Caco-2 (cell line): ENCODE measurements at regions of chr10 and their contacts with region 1.

Region 1: DNA sequence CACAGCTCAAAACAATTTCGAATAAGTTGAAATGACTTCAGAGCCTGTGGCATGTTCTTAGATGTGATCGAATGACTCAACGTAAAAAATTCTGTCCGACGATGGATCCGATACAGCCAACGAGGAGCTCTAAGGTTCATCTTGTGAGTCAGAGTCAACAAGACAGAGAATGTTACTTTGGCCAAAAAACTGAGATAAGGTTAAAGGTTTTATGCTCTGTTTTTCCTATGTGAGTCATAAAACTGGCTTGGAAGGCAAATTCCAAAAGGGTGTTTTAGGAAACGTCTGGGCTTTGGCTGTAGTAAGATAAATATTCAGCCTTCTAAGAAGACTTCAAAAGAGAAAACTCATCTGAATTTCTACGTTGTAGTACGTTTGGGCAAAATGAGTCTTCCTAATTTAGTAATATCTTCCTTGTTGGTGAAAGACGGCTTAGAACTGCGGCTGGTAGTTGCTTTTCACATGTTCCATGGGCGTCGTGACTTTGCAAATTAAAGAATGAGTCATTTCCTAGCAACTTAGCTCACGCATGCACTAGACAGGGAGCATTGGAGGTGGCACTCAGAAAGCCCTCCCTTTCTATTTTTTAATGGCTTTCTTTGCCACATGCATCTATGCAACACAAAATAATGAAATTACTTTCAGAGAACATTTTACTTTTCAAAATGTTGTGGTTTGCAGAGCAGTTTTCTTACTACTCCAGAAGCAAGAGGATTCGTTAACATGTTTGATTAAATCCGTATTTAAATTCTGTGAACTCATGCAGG is 28.2 kb downstream of the PFKP start:
- DNase-seq: peak; percentile 78 to 82
- H3K4me3 ChIP-seq: 0 out of 2 replicates have a peak overlapping the region, but pooled peaks have one; percentile 11
- H3K4me3 Mint-ChIP-seq: peak overlapping the region; percentile 63
- H3K27ac Mint-ChIP-seq: peak overlapping the region; percentile 96
- H3K4me1 ChIP-seq: peaks cover 74% of the 10 kb centered on the region
- H3K4me1 Mint-ChIP-seq: peaks cover 56% of the 10 kb centered on the region
- H3K27me3 ChIP-seq: no peaks in the 10 kb centered on the region
- H3K27me3 Mint-ChIP-seq: no peaks in the 10 kb centered on the region
- CTCF ChIP-seq: no peak

Region 2: GRCh38 chr10:3054183-3054850 is 41.2 kb before region 1 on chr10:
- CTCF ChIA-PET with region 1: no interaction called
- POLR2A ChIA-PET with region 1: interaction called, 7 read pairs
- intact Hi-C with region 1: loop called (anchors 1 kb)
- DNase-seq: peak; percentile 62 to 82
- H3K4me3 ChIP-seq: no peak overlapping the region
- H3K4me3 Mint-ChIP-seq: peak overlapping the region; percentile 41
- H3K27ac Mint-ChIP-seq: peak overlapping the region; percentile 80
- H3K4me1 ChIP-seq: peaks cover 53% of the 10 kb centered on the region
- H3K4me1 Mint-ChIP-seq: peaks cover 27% of the 10 kb centered on the region
- H3K27me3 ChIP-seq: no peaks in the 10 kb centered on the region
- H3K27me3 Mint-ChIP-seq: no peaks in the 10 kb centered on the region
- CTCF ChIP-seq: no peak

Region 3: DNA sequence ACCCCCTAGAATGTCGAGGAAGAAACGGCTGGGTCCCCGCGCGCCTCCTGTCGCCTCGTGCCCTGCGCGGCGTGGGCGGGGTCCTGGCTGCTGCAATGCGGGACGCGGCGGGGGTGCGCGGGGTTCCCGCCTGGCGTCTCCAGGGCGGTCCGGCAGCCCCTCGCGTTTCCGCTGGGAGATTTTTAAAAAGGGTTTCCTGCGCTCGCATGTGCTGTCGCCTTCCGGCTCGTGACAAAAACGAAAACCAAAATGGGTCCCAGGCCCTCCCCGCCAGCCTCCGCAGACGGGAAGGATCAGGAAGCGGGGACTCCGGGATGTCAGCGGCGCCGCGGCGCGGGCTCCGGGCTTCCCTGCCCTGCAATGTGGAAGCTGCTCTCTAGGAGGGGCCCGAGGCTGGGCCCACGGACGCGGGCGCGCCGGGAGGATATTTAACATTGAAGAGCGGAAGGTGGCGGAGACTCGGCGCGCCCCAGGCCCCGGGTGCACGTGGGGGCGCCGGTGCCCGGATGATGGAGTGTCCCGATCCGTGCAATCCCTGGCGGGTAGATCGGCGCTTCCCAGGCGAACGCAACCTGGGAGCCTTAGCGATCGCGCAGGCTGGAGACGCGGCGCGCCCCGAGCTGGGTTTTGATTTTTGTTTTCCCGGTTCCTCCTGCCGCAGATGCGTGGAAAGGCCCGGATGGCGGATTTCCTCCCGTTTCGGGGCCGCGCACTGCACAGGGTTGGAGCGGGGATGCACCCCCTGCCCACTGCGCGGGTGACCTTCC is 27.2 kb before region 1 on chr10:
- CTCF ChIA-PET with region 1: interaction called, 7 read pairs
- POLR2A ChIA-PET with region 1: interaction called, 5 read pairs
- intact Hi-C with region 1: loop called (anchors 1 kb)
- DNase-seq: peak; percentile 67 to 76
- H3K4me3 ChIP-seq: peak overlapping the region; percentile 97
- H3K4me3 Mint-ChIP-seq: peak overlapping the region; percentile 95
- H3K27ac Mint-ChIP-seq: peak overlapping the region; percentile 64
- H3K4me1 ChIP-seq: peaks cover 31% of the 10 kb centered on the region
- H3K4me1 Mint-ChIP-seq: peaks cover 34% of the 10 kb centered on the region
- H3K27me3 ChIP-seq: no peaks in the 10 kb centered on the region
- H3K27me3 Mint-ChIP-seq: no peaks in the 10 kb centered on the region
- CTCF ChIP-seq: peak; percentile 20 to 41

Region 4: DNA sequence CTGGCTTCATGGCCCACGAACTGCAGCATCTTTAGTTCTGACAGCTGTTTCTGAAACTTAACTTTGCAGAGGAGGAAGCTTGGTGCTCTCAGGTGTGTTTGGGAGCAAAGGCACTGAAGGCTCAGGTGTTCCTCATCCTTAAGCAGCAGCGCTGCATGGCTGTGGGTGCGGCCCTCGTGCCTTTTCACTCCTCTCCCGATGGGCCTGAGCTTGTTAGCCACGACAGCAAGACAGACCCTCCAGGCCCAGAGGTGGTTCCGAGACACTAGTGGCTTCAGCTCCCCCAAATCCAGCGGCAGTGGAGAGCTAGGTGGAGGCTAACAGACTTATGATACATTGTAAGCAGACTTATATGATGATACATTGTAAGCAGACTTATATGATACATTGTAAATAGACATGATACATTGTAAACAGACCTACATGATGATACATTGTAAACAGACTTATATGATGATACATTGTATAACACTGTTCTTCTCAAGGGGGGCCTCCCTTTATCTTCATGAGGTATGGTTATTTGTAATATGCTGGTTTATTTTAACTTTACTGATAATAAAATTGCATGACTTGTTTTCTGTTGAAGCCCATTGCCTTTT is 14.1 kb before region 1 on chr10:
- CTCF ChIA-PET with region 1: interaction called, 3 read pairs
- POLR2A ChIA-PET with region 1: no interaction called
- intact Hi-C with region 1: loop called (anchors 2 kb)
- DNase-seq: no peak
- H3K4me3 ChIP-seq: no peak overlapping the region
- H3K4me3 Mint-ChIP-seq: no peak overlapping the region
- H3K27ac Mint-ChIP-seq: no peak overlapping the region
- H3K4me1 ChIP-seq: peaks cover 25% of the 10 kb centered on the region
- H3K4me1 Mint-ChIP-seq: peaks cover 28% of the 10 kb centered on the region
- H3K27me3 ChIP-seq: no peaks in the 10 kb centered on the region
- H3K27me3 Mint-ChIP-seq: no peaks in the 10 kb centered on the region
- CTCF ChIP-seq: no peak

Region 5: GRCh38 chr10:3131094-3131493 is 35.5 kb after region 1 on chr10:
- CTCF ChIA-PET with region 1: no interaction called
- POLR2A ChIA-PET with region 1: no interaction called
- intact Hi-C with region 1: loop called (anchors 1 kb)
- DNase-seq: peak; percentile 72 to 79
- H3K4me3 ChIP-seq: no peak overlapping the region
- H3K4me3 Mint-ChIP-seq: no peak overlapping the region
- H3K27ac Mint-ChIP-seq: peak overlapping the region; percentile 75
- H3K4me1 ChIP-seq: peaks cover 12% of the 10 kb centered on the region
- H3K4me1 Mint-ChIP-seq: peaks cover 6% of the 10 kb centered on the region
- H3K27me3 ChIP-seq: no peaks in the 10 kb centered on the region
- H3K27me3 Mint-ChIP-seq: no peaks in the 10 kb centered on the region
- CTCF ChIP-seq: no peak

Region 6: DNA sequence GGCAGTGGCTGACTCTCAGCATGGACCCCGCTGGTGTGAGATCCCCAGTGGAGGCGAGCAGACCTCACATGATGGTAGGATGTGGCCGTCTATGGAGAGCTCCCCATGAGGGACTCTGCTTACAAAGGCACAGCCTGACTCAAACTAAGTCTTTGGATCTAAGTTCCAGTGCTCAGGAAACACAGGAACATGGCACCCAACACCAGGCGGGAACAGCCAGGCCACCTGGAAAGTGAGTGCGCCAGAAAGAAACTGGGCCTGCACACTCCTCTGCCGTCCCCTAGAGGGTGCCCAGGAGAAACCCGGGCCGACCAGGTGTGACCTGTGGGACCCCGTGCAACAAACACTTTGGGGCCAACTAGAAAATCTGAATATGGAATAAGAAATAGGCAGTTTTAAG is 67.0 kb after region 1 on chr10:
- CTCF ChIA-PET with region 1: no interaction called
- POLR2A ChIA-PET with region 1: no interaction called
- intact Hi-C with region 1: no loop called
- DNase-seq: peak in 1 of 2 experiments; percentile 32
- H3K4me3 ChIP-seq: no peak overlapping the region
- H3K4me3 Mint-ChIP-seq: no peak overlapping the region
- H3K27ac Mint-ChIP-seq: no peak overlapping the region
- H3K4me1 ChIP-seq: no peaks in the 10 kb centered on the region
- H3K4me1 Mint-ChIP-seq: no peaks in the 10 kb centered on the region
- H3K27me3 ChIP-seq: no peaks in the 10 kb centered on the region
- H3K27me3 Mint-ChIP-seq: no peaks in the 10 kb centered on the region
- CTCF ChIP-seq: peak; percentile 25 to 44